Activated CD4-positive, alpha-beta T cell treated with anti-CD3 and anti-CD28 coated beads for 36 hours (primary cell): ENCODE measurements at regions of chr1 and their contacts with region 1.

Region 1: GRCh38 chr1:119613769-119614720 is 34.0 kb downstream of the ZNF697 start:
- DNase-seq: peak; percentile 86
- ATAC-seq: peak; percentile 90
- H3K4me3 Mint-ChIP-seq: no peak overlapping the region
- H3K27ac Mint-ChIP-seq: no peak overlapping the region
- H3K4me1 Mint-ChIP-seq: no peaks in the 10 kb centered on the region
- H3K27me3 Mint-ChIP-seq: peaks cover 2% of the 10 kb centered on the region

Region 2: GRCh38 chr1:119397986-119398385 is 216.1 kb before region 1 on chr1:
- CTCF ChIA-PET with region 1: no interaction called
- POLR2A ChIA-PET with region 1: no interaction called
- intact Hi-C with region 1: no loop called
- DNase-seq: no peak
- ATAC-seq: no peak
- H3K4me3 Mint-ChIP-seq: no peak overlapping the region
- H3K27ac Mint-ChIP-seq: no peak overlapping the region
- H3K4me1 Mint-ChIP-seq: no peaks in the 10 kb centered on the region
- H3K27me3 Mint-ChIP-seq: peaks cover 12% of the 10 kb centered on the region

Region 3: DNA sequence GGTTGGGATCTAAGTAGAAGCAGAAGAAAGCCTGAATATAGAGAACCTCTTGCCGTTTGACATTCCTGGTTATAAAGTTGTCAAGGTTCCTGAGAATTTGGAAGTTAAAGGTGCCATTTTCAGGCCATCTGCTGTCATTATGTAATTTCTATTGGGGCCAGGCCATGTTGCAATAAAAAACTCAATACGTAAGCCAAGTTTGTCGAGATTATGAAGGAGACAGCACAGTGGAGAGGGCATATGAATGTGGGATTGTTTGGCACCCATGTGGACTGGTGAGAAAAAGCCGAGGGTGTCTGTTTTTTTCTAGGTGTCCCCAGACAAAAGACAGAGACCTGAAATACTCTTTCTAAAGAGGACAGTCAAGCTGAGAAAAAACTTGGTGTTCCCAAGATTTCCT is 125.8 kb before region 1 on chr1:
- CTCF ChIA-PET with region 1: no interaction called
- POLR2A ChIA-PET with region 1: no interaction called
- intact Hi-C with region 1: no loop called
- DNase-seq: no peak
- ATAC-seq: no peak
- H3K4me3 Mint-ChIP-seq: no peak overlapping the region
- H3K27ac Mint-ChIP-seq: no peak overlapping the region
- H3K4me1 Mint-ChIP-seq: no peaks in the 10 kb centered on the region
- H3K27me3 Mint-ChIP-seq: peaks cover 11% of the 10 kb centered on the region

Region 4: GRCh38 chr1:119549719-119550132 is 64.3 kb before region 1 on chr1:
- CTCF ChIA-PET with region 1: interaction called, 4 read pairs
- POLR2A ChIA-PET with region 1: no interaction called
- intact Hi-C with region 1: loop called in 1 of 2 experiments (anchors 10 kb)
- DNase-seq: peak; percentile 46
- ATAC-seq: peak; percentile 53
- H3K4me3 Mint-ChIP-seq: no peak overlapping the region
- H3K27ac Mint-ChIP-seq: no peak overlapping the region
- H3K4me1 Mint-ChIP-seq: no peaks in the 10 kb centered on the region
- H3K27me3 Mint-ChIP-seq: peaks cover 4% of the 10 kb centered on the region

Region 5: GRCh38 chr1:119662034-119662437 is 48.0 kb after region 1 on chr1:
- CTCF ChIA-PET with region 1: interaction called, 6 read pairs
- POLR2A ChIA-PET with region 1: no interaction called
- intact Hi-C with region 1: loop called (anchors 1 kb)
- DNase-seq: no peak
- ATAC-seq: no peak
- H3K4me3 Mint-ChIP-seq: no peak overlapping the region
- H3K27ac Mint-ChIP-seq: no peak overlapping the region
- H3K4me1 Mint-ChIP-seq: peaks cover 4% of the 10 kb centered on the region
- H3K27me3 Mint-ChIP-seq: peaks cover 16% of the 10 kb centered on the region

Region 6: DNA sequence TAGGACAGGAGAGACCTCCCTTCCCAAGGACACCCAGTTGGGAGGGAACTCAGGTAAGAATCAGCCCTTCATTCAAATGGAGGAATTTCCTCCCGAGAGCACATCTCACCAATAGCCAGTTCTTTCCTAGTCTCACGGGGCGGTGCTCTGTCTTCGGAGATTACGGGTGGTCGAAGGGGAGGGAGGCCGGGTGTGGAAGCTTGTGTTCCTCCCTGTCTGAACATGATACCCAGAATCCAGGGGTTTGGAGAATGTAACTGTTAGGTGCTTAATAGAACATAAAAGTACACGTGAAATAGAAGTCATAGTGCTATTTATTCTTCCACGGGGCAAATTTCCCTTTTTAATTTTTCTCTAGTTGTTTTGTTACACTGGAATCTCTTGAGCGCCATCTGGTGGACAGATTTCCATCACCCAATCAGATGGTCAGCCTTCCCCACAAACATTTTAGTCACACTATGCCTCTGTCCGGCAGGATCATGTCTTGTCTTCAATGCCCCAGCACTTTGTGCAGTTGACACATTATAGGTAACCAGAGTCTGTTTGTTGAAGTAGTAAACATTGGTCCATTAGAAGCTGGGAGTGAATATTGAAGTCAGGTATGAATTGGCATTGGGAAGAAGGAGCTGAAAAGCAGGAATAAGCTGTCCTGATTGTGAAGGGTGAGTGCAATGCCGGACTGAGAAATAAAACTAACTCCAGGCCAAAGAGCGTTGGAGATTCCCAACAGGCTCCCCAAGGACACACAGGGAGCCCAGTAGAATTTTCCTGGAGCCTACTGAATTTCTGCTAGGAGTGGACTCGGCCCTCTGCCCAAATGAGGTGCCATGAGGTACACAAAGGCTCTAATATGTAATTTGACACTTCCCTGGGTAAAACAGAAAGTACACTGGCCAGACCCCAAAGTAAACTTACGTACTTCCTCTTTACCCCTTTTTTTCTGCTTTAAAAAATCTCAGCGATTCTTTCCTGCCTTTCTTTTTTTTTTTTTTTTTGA is 61.6 kb after region 1 on chr1:
- CTCF ChIA-PET with region 1: interaction called, 41 read pairs
- POLR2A ChIA-PET with region 1: no interaction called
- intact Hi-C with region 1: loop called (anchors 1 kb)
- DNase-seq: peak; percentile 82
- ATAC-seq: peak; percentile 68
- H3K4me3 Mint-ChIP-seq: peak overlapping the region; percentile 32
- H3K27ac Mint-ChIP-seq: no peak overlapping the region
- H3K4me1 Mint-ChIP-seq: no peaks in the 10 kb centered on the region
- H3K27me3 Mint-ChIP-seq: peaks cover 17% of the 10 kb centered on the region